GM10248 (cell line): ENCODE measurements at regions of chr6 and their contacts with region 1.

Region 1: GRCh38 chr6:148653138-148653776 is 93.6 kb upstream of the UST start:
- DNase-seq: no peak
- CTCF ChIP-seq: no peak

Region 2: DNA sequence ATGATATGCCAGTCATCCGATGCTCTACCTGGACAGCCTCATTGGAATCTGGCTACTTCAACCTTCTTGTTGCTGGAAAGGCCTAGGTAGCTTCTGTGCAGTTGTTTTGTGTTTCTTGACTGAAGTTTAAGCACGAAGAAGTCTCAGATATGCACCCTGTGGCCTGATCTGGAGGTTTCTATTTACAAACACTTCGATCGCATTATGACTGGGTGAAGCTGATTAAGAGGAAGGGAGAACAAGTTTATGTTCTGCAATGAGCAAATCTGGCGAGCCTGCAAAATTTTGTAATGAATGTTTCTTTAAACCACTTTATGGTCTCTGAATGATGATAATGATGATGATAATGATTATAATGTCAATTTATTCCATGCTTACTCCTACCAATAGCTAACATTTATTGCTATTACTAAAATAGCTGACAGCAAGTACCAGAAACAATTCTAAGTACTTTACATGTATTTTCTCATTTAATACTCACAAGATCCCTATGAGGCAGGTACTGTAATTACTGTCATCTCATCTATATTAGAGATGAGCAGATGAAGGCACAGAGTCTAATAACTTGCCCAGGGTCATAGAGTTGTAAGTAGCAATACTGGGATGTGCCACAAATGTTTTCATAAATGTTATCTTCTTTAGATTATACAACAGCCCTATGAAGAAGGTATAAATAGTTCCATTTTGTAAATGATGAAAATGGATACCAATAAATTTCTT is 32.5 kb before region 1 on chr6:
- CTCF ChIA-PET with region 1: interaction called, 10 read pairs
- POLR2A ChIA-PET with region 1: no interaction called
- DNase-seq: peak; percentile 22
- CTCF ChIP-seq: no peak